Activated naive CD4-positive, alpha-beta T cell treated with anti-CD3 and anti-CD28 coated beads for 36 hours (primary cell): ENCODE measurements at regions of chr2 and their contacts with region 1.

Region 1: GRCh38 chr2:134411828-134412638 is 158.2 kb downstream of the MGAT5 start:
- DNase-seq: peak; percentile 83
- H3K4me3 Mint-ChIP-seq: no peak overlapping the region
- H3K27ac Mint-ChIP-seq: no peak overlapping the region
- H3K4me1 Mint-ChIP-seq: peaks cover 18% of the 10 kb centered on the region
- H3K27me3 Mint-ChIP-seq: no peaks in the 10 kb centered on the region

Region 2: GRCh38 chr2:134198006-134198634 is 213.9 kb before region 1 on chr2:
- CTCF ChIA-PET with region 1: interaction called, 10 read pairs
- intact Hi-C with region 1: no loop called
- DNase-seq: no peak
- H3K4me3 Mint-ChIP-seq: peak overlapping the region; percentile 15
- H3K27ac Mint-ChIP-seq: peak overlapping the region; percentile 77
- H3K4me1 Mint-ChIP-seq: peaks cover 64% of the 10 kb centered on the region
- H3K27me3 Mint-ChIP-seq: no peaks in the 10 kb centered on the region

Region 3: GRCh38 chr2:134207564-134208209 is 204.3 kb before region 1 on chr2:
- CTCF ChIA-PET with region 1: interaction called, 23 read pairs
- intact Hi-C with region 1: no loop called
- DNase-seq: peak; percentile 81
- H3K4me3 Mint-ChIP-seq: no peak overlapping the region
- H3K27ac Mint-ChIP-seq: no peak overlapping the region
- H3K4me1 Mint-ChIP-seq: peaks cover 5% of the 10 kb centered on the region
- H3K27me3 Mint-ChIP-seq: no peaks in the 10 kb centered on the region